ENCODE measurements at regions of chr12 and their contacts with region 1.

Region 1: GRCh38 chr12:108562348-108563135 is at the start of gene ISCU:
- DNase-seq: peak; percentile 99
- ATAC-seq: peak; percentile 57
- H3K4me3 Mint-ChIP-seq: peak within 1 kb of the TSS; percentile 100
- H3K27ac Mint-ChIP-seq: peak within 1 kb of the TSS; percentile 100
- H3K4me1 Mint-ChIP-seq: peaks cover 48% of the 10 kb centered on the region
- H3K27me3 Mint-ChIP-seq: no peaks in the 10 kb centered on the region
- total RNA-seq, gene ISCU: 67.3 to 83.8 TPM

Region 2: GRCh38 chr12:107685360-107686248 is 876.9 kb before region 1 on chr12 and contains the start of gene PWP1:
- CTCF ChIA-PET with region 1: no interaction called
- POLR2A ChIA-PET with region 1: no interaction called
- intact Hi-C with region 1: loop called in 1 of 2 experiments (anchors 1 kb)
- DNase-seq: peak; percentile 97
- ATAC-seq: peak; percentile 92
- H3K4me3 Mint-ChIP-seq: peak within 1 kb of the TSS; percentile 94
- H3K27ac Mint-ChIP-seq: peak within 1 kb of the TSS; percentile 94
- H3K4me1 Mint-ChIP-seq: peaks cover 27% of the 10 kb centered on the region
- H3K27me3 Mint-ChIP-seq: no peaks in the 10 kb centered on the region
- total RNA-seq, gene PWP1: 59.5 to 60.0 TPM

Region 3: GRCh38 chr12:108633534-108634248 is 71.1 kb after region 1 on chr12 and contains the start of gene SELPLG:
- CTCF ChIA-PET with region 1: interaction called, 6 read pairs
- POLR2A ChIA-PET with region 1: interaction called, 7 read pairs
- intact Hi-C with region 1: loop called (anchors 1 to 2 kb)
- DNase-seq: peak; percentile 92
- ATAC-seq: peak; percentile 53
- H3K4me3 Mint-ChIP-seq: peak within 1 kb of the TSS; percentile 81
- H3K27ac Mint-ChIP-seq: peak within 1 kb of the TSS; percentile 99
- H3K4me1 Mint-ChIP-seq: peaks cover 61% of the 10 kb centered on the region
- H3K27me3 Mint-ChIP-seq: no peaks in the 10 kb centered on the region
- total RNA-seq, gene SELPLG: 31.0 to 36.9 TPM

Region 4: DNA sequence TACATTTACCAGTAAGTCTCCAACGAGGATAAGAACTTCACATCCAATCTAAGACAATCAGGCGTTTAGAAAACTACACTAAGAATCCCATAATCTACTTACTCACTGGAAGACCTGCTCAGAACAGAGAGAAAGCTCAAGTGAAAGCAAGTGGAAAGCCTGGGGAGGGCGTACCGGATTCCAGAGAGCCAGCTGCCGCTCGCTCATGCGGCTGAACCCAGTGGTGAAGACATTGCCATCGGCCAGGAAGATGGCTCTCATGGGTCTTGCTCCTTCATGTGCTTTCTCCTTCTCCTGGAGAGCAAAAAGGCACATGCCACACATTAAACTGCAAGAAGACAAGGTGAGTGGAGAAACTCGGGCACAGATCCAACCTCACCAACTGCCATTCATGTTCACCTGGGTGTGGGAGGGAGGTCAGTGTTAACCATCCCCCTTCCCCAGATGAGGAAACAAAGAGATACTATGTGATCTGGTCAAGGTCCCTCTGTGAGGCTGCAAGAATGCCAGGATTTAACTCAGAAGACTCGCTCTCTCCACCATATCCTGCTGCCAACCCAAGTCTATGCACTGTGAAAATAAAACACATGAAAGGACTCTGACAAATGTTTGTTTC is 94.7 kb after region 1 on chr12:
- CTCF ChIA-PET with region 1: no interaction called
- POLR2A ChIA-PET with region 1: no interaction called
- intact Hi-C with region 1: no loop called
- DNase-seq: no peak
- ATAC-seq: no peak
- H3K4me3 Mint-ChIP-seq: no peak overlapping the region
- H3K27ac Mint-ChIP-seq: no peak overlapping the region
- H3K4me1 Mint-ChIP-seq: peaks cover 13% of the 10 kb centered on the region
- H3K27me3 Mint-ChIP-seq: no peaks in the 10 kb centered on the region

Region 5: GRCh38 chr12:108731105-108731865 is 168.7 kb after region 1 on chr12 and contains the start of gene CORO1C:
- CTCF ChIA-PET with region 1: no interaction called
- POLR2A ChIA-PET with region 1: no interaction called
- intact Hi-C with region 1: loop called (anchors 1 to 5 kb)
- DNase-seq: peak; percentile 98
- ATAC-seq: peak; percentile 78
- H3K4me3 Mint-ChIP-seq: peak within 1 kb of the TSS; percentile 88
- H3K27ac Mint-ChIP-seq: peak within 1 kb of the TSS; percentile 93
- H3K4me1 Mint-ChIP-seq: peaks cover 36% of the 10 kb centered on the region
- H3K27me3 Mint-ChIP-seq: no peaks in the 10 kb centered on the region
- total RNA-seq, gene CORO1C: 83.5 to 90.8 TPM

Region 6: GRCh38 chr12:108950991-108951739 is 388.6 kb after region 1 on chr12:
- CTCF ChIA-PET with region 1: interaction called, 3 read pairs
- POLR2A ChIA-PET with region 1: no interaction called
- intact Hi-C with region 1: loop called (anchors 2 to 10 kb)
- DNase-seq: peak; percentile 83
- ATAC-seq: peak; percentile 84
- H3K4me3 Mint-ChIP-seq: no peak overlapping the region
- H3K27ac Mint-ChIP-seq: no peak overlapping the region
- H3K4me1 Mint-ChIP-seq: peaks cover 2% of the 10 kb centered on the region
- H3K27me3 Mint-ChIP-seq: peaks cover 8% of the 10 kb centered on the region

Region 7: DNA sequence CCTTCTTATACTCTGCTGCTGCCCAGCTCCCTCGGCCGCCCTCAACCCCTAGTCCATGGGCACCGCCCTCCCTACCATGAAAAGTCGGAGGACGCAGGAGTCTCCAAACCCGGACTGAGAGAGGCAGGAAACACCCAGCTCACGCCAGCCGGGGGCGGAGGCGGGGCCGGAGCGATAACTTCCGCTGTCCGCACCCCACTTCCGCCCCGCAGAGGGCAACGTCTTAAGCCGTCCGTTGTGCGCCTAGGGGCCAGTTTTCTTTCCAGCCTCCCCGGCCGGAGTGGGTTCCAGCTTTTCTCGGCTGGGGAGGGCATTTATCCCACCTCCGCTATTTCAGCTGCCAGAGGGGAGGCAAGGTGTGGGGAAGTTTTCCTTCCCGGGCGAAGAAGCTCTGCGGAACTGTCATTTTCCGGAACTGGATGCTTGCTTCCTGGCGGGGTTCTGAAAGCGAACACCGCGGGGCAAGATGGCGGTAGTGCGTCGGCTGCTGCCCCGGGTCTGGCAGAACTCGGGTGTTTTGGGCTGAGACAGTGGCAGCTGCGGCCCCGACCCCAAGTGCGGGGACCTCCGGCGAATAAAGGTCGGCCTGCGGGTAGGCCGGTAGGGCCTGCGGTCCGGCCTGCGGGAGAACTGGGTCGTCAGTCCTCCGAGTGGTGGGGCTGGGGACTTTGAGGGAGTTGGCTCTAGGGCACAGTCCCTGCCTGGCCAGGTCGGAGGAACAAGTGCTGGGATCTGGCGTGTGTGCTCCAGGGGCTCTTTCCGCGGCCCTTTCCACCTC is 914.8 kb after region 1 on chr12 and contains the starts of genes KCTD10 and UBE3B:
- CTCF ChIA-PET with region 1: interaction called, 3 read pairs
- POLR2A ChIA-PET with region 1: no interaction called
- intact Hi-C with region 1: loop called in 1 of 2 experiments (anchors 1 kb)
- DNase-seq: peak; percentile 92
- ATAC-seq: peak; percentile 97
- H3K4me3 Mint-ChIP-seq: peak within 1 kb of the TSS; percentile 95
- H3K27ac Mint-ChIP-seq: peak within 1 kb of the TSS; percentile 99
- H3K4me1 Mint-ChIP-seq: peaks cover 43% of the 10 kb centered on the region
- H3K27me3 Mint-ChIP-seq: no peaks in the 10 kb centered on the region
- total RNA-seq, gene KCTD10: 42.0 to 46.3 TPM
- total RNA-seq, gene UBE3B: 25.7 to 27.2 TPM